ENCODE measurements at regions of chr20 and their contacts with region 1.

Region 1: GRCh38 chr20:37406010-37406998 is 60.4 kb downstream of the SRC start:
- DNase-seq: no peak
- H3K4me3 ChIP-seq: peak overlapping the region; percentile 16 to 67 (median 42)
- H3K27ac ChIP-seq: no peak overlapping the region
- H3K4me1 ChIP-seq: no peaks in the 10 kb centered on the region
- H3K27me3 ChIP-seq: no peaks in the 10 kb centered on the region
- CTCF ChIP-seq: no peak
- POLR2A ChIP-seq: no peak

Region 2: DNA sequence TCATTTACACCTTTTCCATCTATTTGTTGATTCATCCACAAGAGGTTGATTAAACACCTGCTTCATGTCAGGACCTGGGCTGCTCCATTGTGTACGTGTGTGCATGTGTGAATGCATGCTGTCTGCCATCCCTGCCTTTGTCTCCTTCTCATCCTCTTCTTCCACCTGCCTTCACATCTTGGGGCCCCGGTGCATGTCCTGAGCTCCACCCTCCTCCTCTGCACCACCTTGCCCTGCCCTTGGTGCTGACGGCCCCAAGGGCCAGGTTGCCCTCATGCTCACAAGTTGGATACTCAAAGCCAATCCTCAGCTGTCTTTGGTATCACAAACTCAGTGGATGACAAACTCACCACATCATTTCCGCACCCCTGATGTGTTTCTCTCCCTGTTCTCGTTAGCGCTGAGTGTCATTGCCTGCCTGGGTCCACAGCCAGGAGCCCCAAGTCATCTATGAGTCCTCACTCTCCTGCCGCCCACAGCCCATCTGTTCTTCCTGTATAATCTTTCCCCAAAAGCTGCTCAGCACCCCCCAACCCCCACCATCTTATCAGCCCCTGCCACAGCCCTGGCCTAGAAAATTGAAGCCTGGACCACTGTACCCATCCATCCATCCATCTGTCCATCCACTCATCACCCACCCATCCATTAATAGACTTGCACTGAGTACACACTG is 24.6 kb after region 1 on chr20:
- intact Hi-C with region 1: no loop called
- DNase-seq: no peak
- H3K4me3 ChIP-seq: no peak overlapping the region
- H3K27ac ChIP-seq: no peak overlapping the region
- H3K4me1 ChIP-seq: no peaks in the 10 kb centered on the region
- H3K27me3 ChIP-seq: no peaks in the 10 kb centered on the region
- CTCF ChIP-seq: no peak
- POLR2A ChIP-seq: no peak

Region 3: GRCh38 chr20:37519508-37520128 is 113.3 kb after region 1 on chr20:
- intact Hi-C with region 1: loop called (anchors 10 kb)
- DNase-seq: no peak
- H3K4me3 ChIP-seq: peak overlapping the region in 1 of 3 donors; percentile 40
- H3K27ac ChIP-seq: peak overlapping the region; percentile 42 to 77
- H3K4me1 ChIP-seq: peaks cover 0 to 10% of the 10 kb centered on the region in 2 donors
- H3K27me3 ChIP-seq: no peaks in the 10 kb centered on the region
- CTCF ChIP-seq: no peak
- POLR2A ChIP-seq: no peak